B cell (primary cell): ENCODE measurements at regions of chrX and their contacts with region 1.

Region 1: GRCh38 chrX:13742397-13743176 is 8.0 kb downstream of the OFD1 start:
- DNase-seq: peak; percentile 84
- ATAC-seq: peak; percentile 90
- H3K4me3 ChIP-seq: peak overlapping the region in 4 of 5 experiments; percentile 14 to 58 (median 32)
- H3K4me3 Mint-ChIP-seq: peak overlapping the region; percentile 88
- H3K27ac ChIP-seq: peak overlapping the region; percentile 87 to 91
- H3K27ac Mint-ChIP-seq: peak overlapping the region; percentile 96
- H3K4me1 ChIP-seq: peaks cover 25 to 28% of the 10 kb centered on the region in 2 donors
- H3K4me1 Mint-ChIP-seq: peaks cover 33% of the 10 kb centered on the region
- H3K27me3 ChIP-seq: no peaks in the 10 kb centered on the region
- H3K27me3 Mint-ChIP-seq: no peaks in the 10 kb centered on the region
- CTCF ChIP-seq: no peak

Region 2: GRCh38 chrX:13653022-13653693 is 89.4 kb before region 1 on chrX and contains the start of gene TCEANC:
- CTCF ChIA-PET with region 1: interaction called, 3 read pairs
- POLR2A ChIA-PET with region 1: no interaction called
- intact Hi-C with region 1: loop called (anchors 2 kb)
- DNase-seq: peak; percentile 92
- ATAC-seq: peak; percentile 93
- H3K4me3 ChIP-seq: peak within 1 kb of the TSS; percentile 59 to 92 (median 78)
- H3K4me3 Mint-ChIP-seq: peak within 1 kb of the TSS; percentile 94
- H3K27ac ChIP-seq: peak within 1 kb of the TSS; percentile 84 to 96
- H3K27ac Mint-ChIP-seq: peak within 1 kb of the TSS; percentile 96
- H3K4me1 ChIP-seq: peaks cover 12 to 15% of the 10 kb centered on the region in 2 donors
- H3K4me1 Mint-ChIP-seq: peaks cover 11% of the 10 kb centered on the region
- H3K27me3 ChIP-seq: no peaks in the 10 kb centered on the region
- H3K27me3 Mint-ChIP-seq: no peaks in the 10 kb centered on the region
- CTCF ChIP-seq: no peak
- total RNA-seq, gene TCEANC: 10.0 and 10.7 TPM in 2 replicates

Region 3: GRCh38 chrX:13761606-13762414 is 19.2 kb after region 1 on chrX:
- CTCF ChIA-PET with region 1: interaction called, 4 read pairs
- POLR2A ChIA-PET with region 1: no interaction called
- intact Hi-C with region 1: loop called (anchors 2 kb)
- DNase-seq: no peak
- ATAC-seq: no peak
- H3K4me3 ChIP-seq: no peak overlapping the region
- H3K4me3 Mint-ChIP-seq: no peak overlapping the region
- H3K27ac ChIP-seq: peak overlapping the region; percentile 38 to 49
- H3K27ac Mint-ChIP-seq: peak overlapping the region; percentile 50
- H3K4me1 ChIP-seq: peaks cover 46 to 49% of the 10 kb centered on the region in 2 donors
- H3K4me1 Mint-ChIP-seq: peaks cover 51% of the 10 kb centered on the region
- H3K27me3 ChIP-seq: no peaks in the 10 kb centered on the region
- H3K27me3 Mint-ChIP-seq: no peaks in the 10 kb centered on the region
- CTCF ChIP-seq: no peak

Region 4: GRCh38 chrX:14125462-14125861 is 382.9 kb after region 1 on chrX:
- CTCF ChIA-PET with region 1: no interaction called
- POLR2A ChIA-PET with region 1: no interaction called
- intact Hi-C with region 1: no loop called
- DNase-seq: no peak
- ATAC-seq: no peak
- H3K4me3 ChIP-seq: no peak overlapping the region
- H3K4me3 Mint-ChIP-seq: no peak overlapping the region
- H3K27ac ChIP-seq: no peak overlapping the region
- H3K27ac Mint-ChIP-seq: no peak overlapping the region
- H3K4me1 ChIP-seq: no peaks in the 10 kb centered on the region
- H3K4me1 Mint-ChIP-seq: no peaks in the 10 kb centered on the region
- H3K27me3 ChIP-seq: no peaks in the 10 kb centered on the region
- H3K27me3 Mint-ChIP-seq: peaks cover 2% of the 10 kb centered on the region
- CTCF ChIP-seq: no peak